Astrocyte of the cerebellum (primary cell): ENCODE measurements at regions of chr13 and their contacts with region 1.

Region 1: GRCh38 chr13:30114571-30115256 is 192.6 kb downstream of the KATNAL1 start:
- DNase-seq: peak; percentile 49
- H3K4me3 ChIP-seq: peak overlapping the region; percentile 38
- CTCF ChIP-seq: peak; percentile 89

Region 2: GRCh38 chr13:29758531-29759114 is 356.1 kb before region 1 on chr13:
- in situ Hi-C with region 1: loop called (anchors 10 kb)
- DNase-seq: no peak
- H3K4me3 ChIP-seq: no peak overlapping the region
- CTCF ChIP-seq: no peak

Region 3: DNA sequence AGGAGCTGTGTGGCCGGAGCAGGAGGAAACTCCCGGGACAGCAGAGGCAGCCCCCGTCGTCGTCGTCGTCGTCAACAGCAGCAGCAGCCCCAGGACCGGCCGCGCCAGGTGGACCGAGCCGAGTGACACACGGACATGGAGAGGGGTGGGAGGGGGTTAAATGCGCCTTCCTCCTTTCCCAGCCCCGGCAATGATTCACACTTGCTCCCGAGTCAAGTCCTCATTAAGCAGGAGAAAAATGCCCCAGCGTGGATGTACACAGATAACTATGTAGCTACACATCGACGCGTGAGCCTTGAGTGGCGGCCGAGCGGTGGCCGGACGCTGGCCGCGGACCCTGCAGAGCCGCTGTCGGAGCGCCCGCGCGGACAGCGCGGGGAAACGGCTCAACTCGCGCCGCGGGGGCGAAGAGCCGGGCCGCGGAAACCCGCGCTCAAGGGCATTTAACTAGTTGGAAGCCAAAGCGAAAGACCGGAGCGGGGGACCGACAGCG is 264.9 kb before region 1 on chr13:
- in situ Hi-C with region 1: loop called (anchors 5 kb)
- DNase-seq: no peak
- H3K4me3 ChIP-seq: peak overlapping the region; percentile 91
- CTCF ChIP-seq: no peak

Region 4: DNA sequence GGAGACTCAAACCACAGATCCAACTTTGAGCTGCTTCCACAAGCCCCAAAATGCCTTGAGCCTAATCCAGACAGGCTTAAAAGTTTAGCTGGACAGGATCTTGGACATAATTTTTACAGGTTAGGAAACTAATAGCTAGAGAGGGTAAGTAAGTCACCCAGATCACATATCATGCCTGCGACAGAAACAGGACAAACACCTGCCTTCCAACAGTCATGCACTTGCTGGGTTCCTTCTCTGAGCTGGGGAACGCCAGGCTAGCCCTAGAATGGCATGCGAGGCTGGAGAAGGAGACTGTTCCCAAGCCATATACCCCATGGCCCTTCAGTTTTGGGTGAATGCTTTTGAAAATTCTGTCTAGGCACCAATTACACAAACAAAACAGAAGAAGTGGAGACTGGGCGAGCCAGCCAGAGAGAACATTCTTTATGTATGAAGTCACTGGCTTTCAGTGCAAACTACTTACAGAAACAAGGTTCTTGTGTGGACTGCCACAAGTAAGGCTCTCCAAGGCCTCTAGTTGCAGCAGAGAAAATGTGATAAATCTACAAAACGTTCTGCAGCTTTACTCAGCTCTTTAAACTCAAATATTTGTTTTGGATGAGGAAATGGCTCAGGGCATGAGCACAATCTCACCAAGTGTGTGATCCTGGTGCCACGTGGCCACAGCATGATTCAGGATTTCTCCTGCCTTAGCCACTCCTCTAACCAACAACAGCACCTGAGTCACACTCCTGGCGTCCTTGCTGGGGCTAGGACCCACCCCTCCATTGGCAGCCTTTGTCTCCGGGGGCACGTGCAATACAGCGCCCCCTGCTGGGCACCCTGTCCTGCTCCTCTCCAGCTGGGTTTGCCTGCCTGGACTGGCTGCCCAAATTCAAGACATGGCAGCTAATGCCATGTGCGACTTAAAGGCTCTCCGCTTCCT is 190.9 kb before region 1 on chr13:
- in situ Hi-C with region 1: loop called (anchors 5 kb)
- DNase-seq: peak; percentile 96
- H3K4me3 ChIP-seq: no peak overlapping the region
- CTCF ChIP-seq: peak; percentile 96